GM12878 (cell line): ENCODE measurements at regions of chr14 and their contacts with region 1.

Region 1: GRCh38 chr14:51979088-51979709 is 10.1 kb upstream of the RTRAF start:
- DNase-seq: peak; percentile 43
- ATAC-seq: peak; percentile 86
- H3K4me3 ChIP-seq: no peak overlapping the region
- H3K27ac ChIP-seq: no peak overlapping the region
- H3K4me1 ChIP-seq: peaks cover 3% of the 10 kb centered on the region
- H3K27me3 ChIP-seq: no peaks in the 10 kb centered on the region
- CTCF ChIP-seq: peak; percentile 86 to 91 (median 87)
- EP300 ChIP-seq: no peak
- POLR2A ChIP-seq: no peak
- RAD21 ChIP-seq: peak; percentile 92

Region 2: DNA sequence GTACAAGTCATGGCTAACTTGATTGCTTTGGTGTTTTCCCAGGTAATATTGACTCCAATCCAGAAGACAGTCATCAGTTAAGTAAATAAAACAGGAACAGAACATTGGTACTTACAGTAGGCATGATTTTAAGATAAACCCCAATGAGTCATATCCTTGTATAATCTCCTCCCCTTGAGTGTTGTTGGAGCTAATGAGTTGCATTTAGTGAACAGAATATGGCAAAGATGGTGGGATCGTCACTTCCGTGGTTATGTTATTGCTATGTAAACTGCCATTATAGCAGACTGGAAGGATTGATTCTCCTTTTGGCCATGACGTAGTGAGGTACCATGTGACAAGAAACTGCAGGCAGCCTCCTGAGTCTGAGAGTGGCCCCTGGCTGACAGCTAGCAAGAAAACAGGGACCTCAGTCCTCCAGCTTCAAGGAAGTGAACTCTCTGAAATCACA is 636.9 kb before region 1 on chr14:
- CTCF ChIA-PET with region 1: no interaction called
- POLR2A ChIA-PET with region 1: no interaction called
- RAD21 ChIA-PET with region 1: no interaction called
- SMC1A ChIA-PET with region 1: no interaction called
- in situ Hi-C with region 1: no loop called
- intact Hi-C with region 1: no loop called
- DNase-seq: no peak
- ATAC-seq: no peak; the same call in 2 of the 3 replicates
- H3K4me3 ChIP-seq: no peak overlapping the region
- H3K27ac ChIP-seq: no peak overlapping the region
- H3K4me1 ChIP-seq: no peaks in the 10 kb centered on the region
- H3K27me3 ChIP-seq: no peaks in the 10 kb centered on the region
- CTCF ChIP-seq: no peak
- EP300 ChIP-seq: no peak
- POLR2A ChIP-seq: no peak
- RAD21 ChIP-seq: no peak

Region 3: GRCh38 chr14:51780006-51780692 is 199.1 kb before region 1 on chr14:
- CTCF ChIA-PET with region 1: interaction called, 33 read pairs
- POLR2A ChIA-PET with region 1: no interaction called
- RAD21 ChIA-PET with region 1: interaction called, 5 read pairs
- SMC1A ChIA-PET with region 1: interaction called, 25 read pairs
- in situ Hi-C with region 1: no loop called
- intact Hi-C with region 1: loop called (anchors 1 kb)
- DNase-seq: peak; percentile 21
- ATAC-seq: peak; percentile 87
- H3K4me3 ChIP-seq: no peak overlapping the region
- H3K27ac ChIP-seq: no peak overlapping the region
- H3K4me1 ChIP-seq: no peaks in the 10 kb centered on the region
- H3K27me3 ChIP-seq: no peaks in the 10 kb centered on the region
- CTCF ChIP-seq: peak; percentile 73 to 83 (median 73)
- EP300 ChIP-seq: no peak
- POLR2A ChIP-seq: no peak
- RAD21 ChIP-seq: peak; percentile 88

Region 4: GRCh38 chr14:51846631-51847488 is 132.3 kb before region 1 on chr14:
- CTCF ChIA-PET with region 1: interaction called, 23 read pairs
- POLR2A ChIA-PET with region 1: no interaction called
- RAD21 ChIA-PET with region 1: interaction called, 16 read pairs
- SMC1A ChIA-PET with region 1: interaction called, 30 read pairs
- in situ Hi-C with region 1: no loop called
- intact Hi-C with region 1: loop called (anchors 2 kb)
- DNase-seq: peak; percentile 93
- ATAC-seq: peak; percentile 83
- H3K4me3 ChIP-seq: peak overlapping the region; percentile 67
- H3K27ac ChIP-seq: peak overlapping the region; percentile 97
- H3K4me1 ChIP-seq: peaks cover 54% of the 10 kb centered on the region
- H3K27me3 ChIP-seq: no peaks in the 10 kb centered on the region
- CTCF ChIP-seq: no peak
- EP300 ChIP-seq: peak; percentile 75 to 93
- POLR2A ChIP-seq: peak; percentile 87
- RAD21 ChIP-seq: no peak

Region 5: GRCh38 chr14:51865953-51866747 is 113.0 kb before region 1 on chr14:
- CTCF ChIA-PET with region 1: interaction called, 33 read pairs
- POLR2A ChIA-PET with region 1: interaction called, 3 read pairs
- RAD21 ChIA-PET with region 1: interaction called, 26 read pairs
- SMC1A ChIA-PET with region 1: interaction called, 26 read pairs
- in situ Hi-C with region 1: no loop called
- intact Hi-C with region 1: loop called (anchors 5 kb)
- DNase-seq: no peak
- ATAC-seq: peak; percentile 62
- H3K4me3 ChIP-seq: peak overlapping the region; percentile 34
- H3K27ac ChIP-seq: peak overlapping the region; percentile 88
- H3K4me1 ChIP-seq: peaks cover 44% of the 10 kb centered on the region
- H3K27me3 ChIP-seq: no peaks in the 10 kb centered on the region
- CTCF ChIP-seq: no peak
- EP300 ChIP-seq: 0 out of 4 replicates have a peak, but pooled peaks of 1 of the 2 experiments have one; percentile 20
- POLR2A ChIP-seq: no peak
- RAD21 ChIP-seq: no peak

Region 6: DNA sequence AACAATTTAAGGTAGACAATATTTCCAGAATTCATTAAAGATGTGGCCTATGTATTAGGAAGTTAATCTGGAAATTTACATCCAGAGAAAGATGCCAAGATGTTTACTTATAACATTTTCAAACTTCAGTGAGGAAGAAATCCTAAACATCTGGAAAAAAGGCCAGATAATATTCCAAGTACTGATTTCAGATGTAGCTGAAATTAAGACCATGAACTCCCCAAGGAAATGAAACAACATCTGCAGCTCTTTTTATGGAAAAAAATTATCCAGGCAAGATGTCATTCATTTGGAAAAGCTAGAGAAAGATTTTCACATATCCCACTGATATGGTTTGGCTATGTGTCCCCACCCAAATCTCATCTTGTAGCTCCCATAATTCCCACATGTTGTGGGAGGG is 83.8 kb before region 1 on chr14:
- CTCF ChIA-PET with region 1: interaction called, 15 read pairs
- POLR2A ChIA-PET with region 1: no interaction called
- RAD21 ChIA-PET with region 1: interaction called, 3 read pairs
- SMC1A ChIA-PET with region 1: interaction called, 4 read pairs
- in situ Hi-C with region 1: no loop called
- intact Hi-C with region 1: no loop called
- DNase-seq: no peak
- ATAC-seq: no peak
- H3K4me3 ChIP-seq: no peak overlapping the region
- H3K27ac ChIP-seq: no peak overlapping the region
- H3K4me1 ChIP-seq: no peaks in the 10 kb centered on the region
- H3K27me3 ChIP-seq: no peaks in the 10 kb centered on the region
- CTCF ChIP-seq: no peak
- EP300 ChIP-seq: no peak
- POLR2A ChIP-seq: no peak
- RAD21 ChIP-seq: no peak

Region 7: DNA sequence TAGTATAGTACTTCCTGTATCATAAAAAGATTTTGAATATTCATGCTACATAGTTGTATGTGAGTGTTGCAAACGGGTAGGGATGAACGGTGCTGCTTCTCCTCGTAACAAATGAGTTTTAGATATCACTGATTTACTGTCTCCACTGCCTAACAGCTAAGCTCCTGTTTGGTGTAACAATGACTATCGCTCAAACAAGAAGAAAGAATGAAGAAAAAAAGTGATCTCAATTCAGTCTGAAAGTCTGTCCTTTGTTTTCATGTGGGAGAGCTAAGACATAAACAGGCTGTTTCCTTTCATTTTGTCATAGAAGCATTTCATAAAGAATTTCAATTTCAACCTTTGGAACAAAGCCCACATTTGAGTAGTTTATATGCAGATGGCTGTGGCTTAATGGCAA is 15.9 kb before region 1 on chr14:
- CTCF ChIA-PET with region 1: interaction called, 30 read pairs
- POLR2A ChIA-PET with region 1: no interaction called
- RAD21 ChIA-PET with region 1: interaction called, 9 read pairs
- SMC1A ChIA-PET with region 1: interaction called, 15 read pairs
- in situ Hi-C with region 1: no loop called
- intact Hi-C with region 1: no loop called
- DNase-seq: no peak
- ATAC-seq: no peak
- H3K4me3 ChIP-seq: no peak overlapping the region
- H3K27ac ChIP-seq: no peak overlapping the region
- H3K4me1 ChIP-seq: no peaks in the 10 kb centered on the region
- H3K27me3 ChIP-seq: no peaks in the 10 kb centered on the region
- CTCF ChIP-seq: no peak
- EP300 ChIP-seq: no peak
- POLR2A ChIP-seq: no peak
- RAD21 ChIP-seq: no peak

Region 8: DNA sequence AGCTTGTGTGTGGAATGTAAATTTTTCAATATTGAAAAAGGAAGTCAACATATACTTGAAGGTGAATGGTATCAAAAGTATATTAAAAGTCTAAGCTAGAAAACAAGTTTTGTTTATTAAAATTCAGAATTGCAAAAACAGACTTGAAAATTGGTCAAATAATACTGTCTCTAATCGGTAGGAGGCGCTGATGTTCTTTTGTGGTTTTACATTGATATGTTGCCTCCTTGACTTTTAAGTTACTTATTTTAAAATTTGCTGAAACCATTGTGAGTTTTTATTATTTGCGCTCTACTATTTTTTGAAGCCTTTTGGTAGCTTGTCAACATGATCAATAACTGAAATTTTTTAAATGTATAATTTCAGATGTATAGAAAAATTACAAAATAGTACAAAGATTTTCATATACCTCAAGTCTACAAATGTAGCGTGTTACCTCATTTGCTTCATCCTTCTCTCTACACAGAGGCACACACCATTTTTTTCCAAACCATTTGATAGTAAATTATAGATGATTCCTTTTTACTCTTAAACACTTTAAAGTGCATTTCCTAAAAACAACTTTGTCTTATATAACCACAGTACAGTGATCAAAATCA is 17.0 kb after region 1 on chr14:
- CTCF ChIA-PET with region 1: interaction called, 67 read pairs
- POLR2A ChIA-PET with region 1: interaction called, 3 read pairs
- RAD21 ChIA-PET with region 1: interaction called, 5 read pairs
- SMC1A ChIA-PET with region 1: interaction called, 16 read pairs
- in situ Hi-C with region 1: no loop called
- intact Hi-C with region 1: no loop called
- DNase-seq: no peak
- ATAC-seq: 0 out of 3 replicates have a peak, but pooled peaks have one; percentile 22
- H3K4me3 ChIP-seq: no peak overlapping the region
- H3K27ac ChIP-seq: no peak overlapping the region
- H3K4me1 ChIP-seq: peaks cover under 1% of the 10 kb centered on the region
- H3K27me3 ChIP-seq: no peaks in the 10 kb centered on the region
- CTCF ChIP-seq: peak; percentile 50 to 60 (median 56); a peak in 5 of 6 replicates
- EP300 ChIP-seq: no peak
- POLR2A ChIP-seq: no peak
- RAD21 ChIP-seq: peak; percentile 65

Region 9: GRCh38 chr14:52060080-52060479 is 80.9 kb after region 1 on chr14:
- CTCF ChIA-PET with region 1: no interaction called
- POLR2A ChIA-PET with region 1: no interaction called
- RAD21 ChIA-PET with region 1: no interaction called
- SMC1A ChIA-PET with region 1: no interaction called
- in situ Hi-C with region 1: no loop called
- intact Hi-C with region 1: no loop called
- DNase-seq: no peak
- ATAC-seq: no peak
- H3K4me3 ChIP-seq: no peak overlapping the region
- H3K27ac ChIP-seq: no peak overlapping the region
- H3K4me1 ChIP-seq: no peaks in the 10 kb centered on the region
- H3K27me3 ChIP-seq: no peaks in the 10 kb centered on the region; a peak in 2 of 4 replicates
- CTCF ChIP-seq: no peak
- EP300 ChIP-seq: no peak
- POLR2A ChIP-seq: no peak
- RAD21 ChIP-seq: no peak